HAP-1 (cell line): ENCODE measurements at regions of chr5 and their contacts with region 1.

Region 1: DNA sequence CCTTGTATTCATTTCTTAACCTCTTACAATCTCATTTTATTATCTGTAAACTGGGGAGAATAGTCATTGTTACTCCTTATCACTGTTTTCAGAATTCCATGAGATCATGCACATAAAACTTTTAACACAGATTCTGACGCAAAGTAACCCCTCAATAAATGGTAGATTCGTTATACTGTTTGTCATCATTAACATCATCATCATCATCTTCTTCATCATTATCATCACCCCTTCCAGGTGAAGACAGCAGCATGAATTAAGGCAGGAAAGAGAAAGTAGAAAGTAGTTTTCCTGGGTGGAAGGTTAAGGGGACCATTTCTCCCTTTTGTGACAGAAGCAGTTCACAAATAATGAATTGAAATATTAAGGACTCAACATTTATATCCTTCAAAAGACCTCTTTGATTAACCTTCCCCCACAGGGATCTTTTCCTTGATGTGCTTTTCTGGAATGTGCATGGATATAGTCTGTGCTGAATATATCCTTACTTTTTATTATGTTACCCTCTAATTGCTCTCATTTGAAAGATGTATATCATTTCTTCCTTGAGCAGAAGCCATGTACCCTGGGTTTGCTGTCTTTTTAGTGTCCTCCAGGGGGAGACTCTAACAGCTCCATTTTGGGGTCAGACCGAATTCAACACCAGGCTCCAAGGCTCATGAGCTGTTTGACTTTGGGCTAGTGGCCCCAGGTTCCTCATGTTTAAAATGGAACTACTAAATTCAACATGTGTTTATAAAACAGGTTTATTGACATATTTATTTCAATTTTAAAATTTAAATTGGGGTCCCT is 1029.9 kb upstream of the WWC1 start:
- DNase-seq: peak; percentile 12 to 14
- H3K4me3 ChIP-seq: no peak overlapping the region
- H3K4me1 ChIP-seq: no peaks in the 10 kb centered on the region
- H3K27me3 ChIP-seq: no peaks in the 10 kb centered on the region

Region 2: DNA sequence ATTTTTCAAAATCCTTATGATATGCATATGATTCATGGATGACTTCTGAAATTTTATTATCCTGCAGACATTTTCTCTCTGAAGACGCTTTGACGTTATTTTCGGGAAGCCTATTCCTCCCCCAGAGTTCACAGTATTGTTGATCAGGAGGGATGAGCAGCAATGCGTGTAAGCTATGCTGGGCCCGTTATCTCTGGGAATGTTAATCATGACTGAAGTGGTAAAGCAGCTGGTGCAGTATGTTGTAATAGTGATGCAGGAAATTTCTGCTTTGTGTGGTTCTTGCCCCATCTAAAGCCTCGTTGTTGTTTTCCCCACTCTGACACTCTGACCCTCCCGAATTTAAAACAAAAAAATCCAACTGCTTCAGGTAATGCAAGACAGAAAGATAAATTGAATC is 767.9 kb before region 1 on chr5:
- in situ Hi-C with region 1: no loop called
- DNase-seq: no peak
- H3K4me3 ChIP-seq: no peak overlapping the region
- H3K4me1 ChIP-seq: peaks cover 3% of the 10 kb centered on the region; the same call in 1 of the 2 replicates
- H3K27me3 ChIP-seq: no peaks in the 10 kb centered on the region

Region 3: GRCh38 chr5:167147879-167148278 is 113.6 kb before region 1 on chr5:
- in situ Hi-C with region 1: no loop called
- DNase-seq: no peak
- H3K4me3 ChIP-seq: no peak overlapping the region
- H3K4me1 ChIP-seq: no peaks in the 10 kb centered on the region
- H3K27me3 ChIP-seq: no peaks in the 10 kb centered on the region

Region 4: GRCh38 chr5:167573370-167574127 is 312.0 kb after region 1 on chr5:
- in situ Hi-C with region 1: loop called (anchors 25 kb)
- DNase-seq: peak; percentile 63 to 74
- H3K4me3 ChIP-seq: peak overlapping the region; percentile 21
- H3K4me1 ChIP-seq: peaks cover 14% of the 10 kb centered on the region
- H3K27me3 ChIP-seq: peaks cover 13% of the 10 kb centered on the region